Ascending aorta (tissue), 2 donors: ENCODE measurements at regions of chr1 and their contacts with region 1.

Region 1: DNA sequence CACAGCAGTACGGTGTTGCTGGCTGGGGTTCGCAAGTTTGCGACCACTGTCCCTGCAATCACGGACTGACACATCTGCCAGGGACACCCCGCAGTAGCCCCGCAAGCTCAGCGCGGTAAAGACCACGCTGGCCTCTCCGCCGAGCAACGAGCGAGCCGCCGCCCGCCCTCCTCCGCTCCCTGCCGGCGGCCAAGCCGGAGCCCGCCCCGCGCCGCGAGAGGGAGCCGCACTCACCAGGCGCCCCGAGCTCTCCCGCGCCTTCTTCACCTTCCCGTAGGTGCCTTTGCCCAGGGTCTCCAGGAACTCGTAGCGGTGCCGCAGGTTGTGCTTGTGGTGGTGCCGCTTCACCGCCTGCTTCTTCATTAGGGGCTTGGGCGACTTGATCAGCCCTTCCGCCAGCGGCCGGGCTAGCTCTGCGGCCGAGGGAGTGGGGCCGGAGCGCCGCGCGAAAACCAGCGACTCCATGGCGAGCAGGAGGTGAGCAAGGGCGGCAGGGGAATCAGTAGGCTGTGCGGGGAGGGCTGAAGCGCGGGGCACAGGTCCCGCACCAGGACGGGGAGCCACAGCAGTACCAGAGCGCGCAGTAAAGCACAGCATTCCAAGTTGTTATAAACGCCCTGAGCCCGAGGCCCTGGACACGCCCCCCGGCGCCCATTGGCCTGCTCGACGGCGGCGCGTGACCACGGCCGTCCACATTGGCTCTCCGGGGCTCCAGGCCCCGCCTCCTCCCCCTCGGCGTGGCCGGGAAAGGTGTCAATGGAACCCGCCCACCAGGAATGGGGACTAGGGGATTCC is at the start of gene NUAK2:
- DNase-seq: peak; percentile 63 to 92
- H3K4me3 ChIP-seq: peak within 1 kb of the TSS; percentile 79 to 87
- H3K27ac ChIP-seq: peak within 1 kb of the TSS; percentile 21 to 40
- H3K4me1 ChIP-seq: peaks cover 0 to 21% of the 10 kb centered on the region in 2 donors
- H3K27me3 ChIP-seq: no peaks in the 10 kb centered on the region
- CTCF ChIP-seq: peak in 2 of 3 experiments; percentile 17 to 37
- total RNA-seq, gene NUAK2: 0.85 TPM

Region 2: GRCh38 chr1:205141236-205142101 is 179.9 kb before region 1 on chr1:
- intact Hi-C with region 1: loop called (anchors 10 kb)
- DNase-seq: peak in 1 of 2 donors; percentile 88
- H3K4me3 ChIP-seq: peak overlapping the region in 1 of 2 donors; percentile 43
- H3K27ac ChIP-seq: no peak overlapping the region
- H3K4me1 ChIP-seq: peaks cover 4 to 7% of the 10 kb centered on the region in 2 donors
- H3K27me3 ChIP-seq: no peaks in the 10 kb centered on the region
- CTCF ChIP-seq: peak; percentile 62 to 75 (median 68)

Region 3: GRCh38 chr1:205273551-205273982 is 47.8 kb before region 1 on chr1:
- intact Hi-C with region 1: loop called (anchors 1 kb)
- DNase-seq: peak in 1 of 2 donors; percentile 90
- H3K4me3 ChIP-seq: no peak overlapping the region
- H3K27ac ChIP-seq: no peak overlapping the region
- H3K4me1 ChIP-seq: no peaks in the 10 kb centered on the region
- H3K27me3 ChIP-seq: no peaks in the 10 kb centered on the region
- CTCF ChIP-seq: peak; percentile 96 to 99 (median 99)